Posterior vena cava (tissue), 2 donors: ENCODE measurements at regions of chr1 and their contacts with region 1.

Region 1: DNA sequence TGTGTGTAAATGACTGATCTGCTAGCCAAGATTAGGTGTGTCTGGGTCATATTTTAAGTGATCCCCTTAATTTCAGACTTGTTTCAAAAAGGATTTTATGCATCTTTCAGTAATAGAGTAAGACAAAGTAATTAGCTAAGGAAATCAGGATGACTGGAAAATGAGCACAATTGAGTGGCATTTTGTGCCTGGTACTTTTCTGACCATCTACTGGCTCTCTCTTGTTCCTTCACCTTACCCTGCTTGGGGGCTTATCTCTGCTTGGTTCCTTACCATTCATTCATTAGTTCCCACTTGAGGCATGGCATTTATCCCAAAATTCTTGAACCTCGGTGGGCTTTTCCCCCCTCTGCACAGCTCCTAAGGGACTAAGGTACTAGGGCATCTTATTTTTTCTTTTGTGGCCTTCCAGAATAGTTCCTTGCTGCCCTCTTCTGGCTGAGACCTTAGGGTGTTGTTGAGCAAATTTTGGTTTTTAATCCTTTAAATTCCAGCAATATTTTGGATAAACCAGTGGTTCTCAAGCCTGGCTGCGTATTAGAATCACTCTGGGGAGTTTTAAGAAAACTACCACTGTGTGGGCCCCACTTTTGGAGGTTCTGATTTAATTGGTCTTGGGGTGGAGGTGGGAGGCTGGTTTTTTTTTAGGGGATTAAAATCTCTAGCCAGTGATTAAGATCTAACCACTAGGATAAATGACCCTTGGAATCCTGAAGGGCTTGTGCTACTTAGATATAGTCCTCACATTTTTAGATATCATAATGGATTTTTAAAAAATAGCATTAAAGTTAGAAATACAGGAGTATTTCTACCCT is 50.8 kb downstream of the HS2ST1 start:
- DNase-seq: no peak

Region 2: GRCh38 chr1:86779308-86780191 is 185.7 kb before region 1 on chr1:
- intact Hi-C with region 1: loop called in 1 of 2 experiments (anchors 5 kb)
- DNase-seq: no peak

Region 3: GRCh38 chr1:86833461-86834215 is 131.6 kb before region 1 on chr1:
- intact Hi-C with region 1: loop called in 1 of 2 experiments (anchors 5 kb)
- DNase-seq: peak; percentile 90

Region 4: DNA sequence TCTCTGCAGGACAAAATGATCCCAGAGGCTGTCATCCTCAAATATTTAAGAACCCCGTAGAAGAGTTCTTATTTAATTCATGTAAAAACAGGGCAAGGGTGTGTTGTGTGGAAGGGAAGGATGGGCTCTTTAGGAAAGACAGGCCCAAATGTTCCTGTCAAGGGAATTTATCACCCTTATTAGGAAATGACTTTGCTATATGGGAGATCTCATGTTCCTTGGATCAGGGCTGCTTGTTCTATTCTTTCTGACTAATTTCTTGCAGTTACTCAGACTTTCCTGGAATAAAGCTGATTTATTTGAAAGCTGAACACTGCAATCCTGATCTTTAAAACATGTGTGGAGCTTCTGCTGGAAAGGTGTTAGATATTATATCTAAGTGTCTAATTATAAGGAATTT is 124.1 kb before region 1 on chr1:
- intact Hi-C with region 1: loop called in 1 of 2 experiments (anchors 1 kb)
- DNase-seq: no peak